SK-N-SH (cell line): ENCODE measurements at regions of chrX and their contacts with region 1.

Region 1: DNA sequence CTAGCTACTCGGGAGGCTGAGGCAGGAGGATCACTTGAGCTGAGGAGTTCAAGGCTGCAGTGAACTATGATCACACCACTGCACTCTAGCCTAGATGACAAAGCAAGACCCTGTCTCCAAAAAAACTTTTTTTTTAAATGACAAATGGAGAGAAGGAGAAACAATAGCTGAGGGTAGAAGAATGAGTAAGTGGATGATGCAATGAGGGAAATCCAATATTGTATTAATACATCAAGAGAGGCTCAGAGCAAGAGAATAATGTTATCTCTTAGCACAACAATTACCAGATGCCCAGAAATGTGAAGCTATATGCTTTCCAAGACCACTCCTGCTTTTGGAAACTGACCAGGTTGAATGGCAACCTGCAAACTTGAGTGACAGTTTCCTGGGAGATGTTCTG is 19.9 kb upstream of the GPR173 start:
- DNase-seq: no peak
- H3K4me3 ChIP-seq: no peak overlapping the region
- H3K27ac ChIP-seq: no peak overlapping the region
- H3K4me1 ChIP-seq: no peaks in the 10 kb centered on the region
- H3K27me3 ChIP-seq: peaks cover 14% of the 10 kb centered on the region; the same call in 1 of the 2 replicates
- CTCF ChIP-seq: no peak
- EP300 ChIP-seq: no peak
- RAD21 ChIP-seq: no peak

Region 2: DNA sequence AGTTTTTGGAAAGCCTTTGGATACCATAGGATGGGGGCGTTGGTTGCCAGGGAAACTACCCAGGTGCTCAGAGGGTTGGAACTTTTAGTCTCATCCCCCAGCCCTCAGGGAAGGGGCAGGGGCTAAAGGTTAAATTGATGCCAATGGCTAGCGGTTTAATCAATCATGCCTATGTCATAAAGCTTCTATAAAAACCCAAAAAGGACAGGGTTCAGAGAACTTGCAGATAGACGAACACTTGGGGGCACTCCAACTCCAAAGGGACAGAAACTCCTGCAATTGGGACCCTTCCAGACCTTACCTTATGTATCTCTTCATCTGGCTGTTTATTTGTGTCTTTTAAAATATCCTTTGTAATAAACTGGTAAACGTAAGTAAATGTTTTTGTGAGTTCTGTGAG is 10.1 kb before region 1 on chrX:
- CTCF ChIA-PET with region 1: interaction called, 10 read pairs
- POLR2A ChIA-PET with region 1: no interaction called
- DNase-seq: no peak
- H3K4me3 ChIP-seq: no peak overlapping the region
- H3K27ac ChIP-seq: no peak overlapping the region
- H3K4me1 ChIP-seq: no peaks in the 10 kb centered on the region
- H3K27me3 ChIP-seq: peaks cover 34% of the 10 kb centered on the region
- CTCF ChIP-seq: no peak
- EP300 ChIP-seq: no peak
- RAD21 ChIP-seq: peak; percentile 57

Region 3: GRCh38 chrX:53039236-53039635 is 10.6 kb after region 1 on chrX:
- CTCF ChIA-PET with region 1: no interaction called
- POLR2A ChIA-PET with region 1: no interaction called
- DNase-seq: no peak
- H3K4me3 ChIP-seq: no peak overlapping the region
- H3K27ac ChIP-seq: no peak overlapping the region
- H3K4me1 ChIP-seq: no peaks in the 10 kb centered on the region
- H3K27me3 ChIP-seq: peaks cover 31% of the 10 kb centered on the region
- CTCF ChIP-seq: no peak
- EP300 ChIP-seq: no peak
- RAD21 ChIP-seq: no peak

Region 4: DNA sequence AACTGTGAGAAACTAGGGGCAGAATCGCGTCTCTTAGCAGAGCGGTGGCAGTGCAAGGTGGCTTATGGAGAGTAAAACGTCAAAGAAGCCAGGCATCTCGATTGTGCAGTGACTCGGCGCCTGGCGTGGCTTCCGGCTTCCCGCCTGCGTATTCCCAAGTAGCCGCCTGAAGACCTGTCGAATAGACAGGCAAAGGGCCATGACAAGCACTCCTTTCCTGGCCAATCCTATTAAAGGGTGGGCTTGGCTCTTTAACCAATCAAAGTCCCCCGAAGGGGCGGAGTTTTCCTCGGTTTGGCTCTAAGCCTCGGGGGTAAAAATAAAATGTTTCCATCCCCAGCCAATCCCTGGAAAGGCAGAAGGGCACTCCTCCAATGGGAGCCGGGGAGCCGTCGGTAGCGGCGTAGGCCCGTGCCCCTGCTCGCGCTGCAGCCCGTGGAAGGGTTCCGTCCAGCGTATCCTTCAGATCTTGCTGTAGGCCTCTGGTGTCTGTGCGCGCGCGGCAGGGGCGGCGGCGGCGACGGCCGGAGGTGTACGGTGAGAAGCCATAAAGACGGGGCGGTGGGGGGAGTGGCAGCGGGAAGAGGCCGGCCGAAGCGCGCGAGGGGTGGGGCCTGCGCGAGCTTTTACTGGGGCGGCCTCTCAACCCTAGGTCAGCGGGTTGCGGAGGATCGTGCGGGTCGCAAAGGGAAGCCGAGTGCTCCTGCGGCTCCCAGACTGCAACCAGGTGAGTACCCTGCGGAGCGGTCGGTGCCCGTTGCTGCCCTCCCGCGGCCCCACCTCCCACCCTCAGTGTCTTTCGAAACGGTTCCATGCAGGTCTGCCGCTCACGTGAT is 65.3 kb after region 1 on chrX and contains the start of gene KANTR:
- CTCF ChIA-PET with region 1: no interaction called
- POLR2A ChIA-PET with region 1: no interaction called
- DNase-seq: peak; percentile 89
- H3K4me3 ChIP-seq: peak within 1 kb of the TSS; percentile 60 to 66
- H3K27ac ChIP-seq: peak within 1 kb of the TSS; percentile 64 to 80
- H3K4me1 ChIP-seq: peaks cover 0 to 3% of the 10 kb centered on the region in 2 experiments; a peak in 1 of 4 replicates
- H3K27me3 ChIP-seq: no peaks in the 10 kb centered on the region; the same call in 1 of the 2 replicates
- CTCF ChIP-seq: no peak
- EP300 ChIP-seq: no peak
- RAD21 ChIP-seq: no peak
- polyA plus RNA-seq, gene KANTR: 2.1 and 3.2 TPM in 2 replicates